ENCODE measurements at regions of chr11 and their contacts with region 1.

Region 1: DNA sequence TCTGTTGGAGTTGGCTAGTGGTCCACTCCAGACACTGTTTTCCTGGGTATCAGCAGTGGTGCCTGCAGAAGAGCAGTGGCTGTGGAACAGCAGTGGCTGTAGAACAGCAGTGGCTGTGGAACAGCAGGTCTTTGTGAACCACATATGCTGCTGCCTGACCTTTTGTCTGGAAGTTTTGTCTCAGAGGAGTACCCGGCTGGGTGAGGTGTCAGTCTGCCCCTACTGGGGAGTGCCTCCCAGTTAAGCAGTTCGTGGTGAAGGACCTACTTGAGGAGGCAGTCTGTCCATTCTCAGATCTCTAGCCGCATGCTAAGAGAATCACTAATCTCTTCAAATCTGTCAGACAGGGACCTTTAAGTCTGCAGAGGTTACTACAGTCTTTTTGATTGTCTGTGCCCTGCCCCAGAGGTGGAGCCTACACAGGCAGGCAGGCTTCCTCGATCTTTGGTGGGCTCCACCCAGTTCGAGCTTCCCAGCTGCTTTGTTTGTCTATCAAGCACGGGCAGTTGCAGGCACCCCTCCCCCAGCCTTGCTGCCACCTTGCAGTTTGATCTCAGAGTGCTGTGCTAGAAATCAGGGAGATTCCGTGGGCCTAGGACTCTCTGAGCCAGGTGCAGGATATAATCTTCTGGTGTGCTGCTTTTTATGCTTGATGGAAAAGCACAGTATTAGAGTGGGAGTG is 89.1 kb upstream of the TRIM48 start:
- DNase-seq: no peak
- ATAC-seq: no peak
- H3K4me3 ChIP-seq: no peak overlapping the region
- H3K27ac ChIP-seq: no peak overlapping the region
- H3K4me1 ChIP-seq: no peaks in the 10 kb centered on the region
- H3K27me3 ChIP-seq: no peaks in the 10 kb centered on the region
- CTCF ChIP-seq: no peak

Region 2: GRCh38 chr11:54944211-54944610 is 228.7 kb before region 1 on chr11:
- CTCF ChIA-PET with region 1: no interaction called
- POLR2A ChIA-PET with region 1: no interaction called
- in situ Hi-C with region 1: no loop called
- intact Hi-C with region 1: no loop called
- DNase-seq: no peak
- ATAC-seq: no peak
- H3K4me3 ChIP-seq: no peak overlapping the region
- H3K27ac ChIP-seq: no peak overlapping the region
- H3K4me1 ChIP-seq: no peaks in the 10 kb centered on the region
- H3K27me3 ChIP-seq: no peaks in the 10 kb centered on the region
- CTCF ChIP-seq: no peak

Region 3: DNA sequence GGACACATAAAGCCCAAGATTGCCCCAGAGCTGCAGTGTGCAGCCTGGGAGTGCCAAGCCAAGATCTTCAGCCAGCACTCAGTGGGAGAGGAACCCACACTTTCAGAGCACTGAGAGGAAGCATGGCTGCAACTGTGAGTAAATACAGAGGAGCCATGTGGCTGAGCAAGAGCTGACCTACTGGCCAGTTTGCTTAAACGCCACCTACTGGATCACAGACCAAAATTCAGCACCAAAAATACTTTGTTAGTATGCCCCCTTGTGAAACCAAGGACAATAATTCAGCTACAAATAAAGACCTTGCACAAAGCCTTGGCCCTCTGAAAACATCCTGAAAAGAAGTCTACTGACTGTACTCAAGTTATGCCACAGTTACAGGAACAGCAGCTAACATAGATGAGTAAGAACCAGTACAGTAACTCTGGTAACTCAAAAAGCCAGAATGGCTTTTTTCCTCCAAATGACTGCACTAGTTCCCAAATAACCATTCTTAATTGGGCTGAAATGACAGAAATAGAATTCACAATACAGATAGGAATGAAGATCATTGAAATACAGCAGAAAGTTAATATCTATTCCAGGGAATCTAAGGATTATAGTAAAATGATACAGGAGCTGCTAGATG is 184.8 kb after region 1 on chr11:
- CTCF ChIA-PET with region 1: no interaction called
- POLR2A ChIA-PET with region 1: no interaction called
- in situ Hi-C with region 1: no loop called
- intact Hi-C with region 1: loop called (anchors 10 kb)
- DNase-seq: no peak
- ATAC-seq: no peak
- H3K4me3 ChIP-seq: no peak overlapping the region
- H3K27ac ChIP-seq: no peak overlapping the region
- H3K4me1 ChIP-seq: no peaks in the 10 kb centered on the region
- H3K27me3 ChIP-seq: no peaks in the 10 kb centered on the region
- CTCF ChIP-seq: peak; percentile 28; the same call in 1 of the 2 replicates

Measured in Panc1 (cell line).